ENCODE measurements at regions of chr13 and their contacts with region 1.

Region 1: DNA sequence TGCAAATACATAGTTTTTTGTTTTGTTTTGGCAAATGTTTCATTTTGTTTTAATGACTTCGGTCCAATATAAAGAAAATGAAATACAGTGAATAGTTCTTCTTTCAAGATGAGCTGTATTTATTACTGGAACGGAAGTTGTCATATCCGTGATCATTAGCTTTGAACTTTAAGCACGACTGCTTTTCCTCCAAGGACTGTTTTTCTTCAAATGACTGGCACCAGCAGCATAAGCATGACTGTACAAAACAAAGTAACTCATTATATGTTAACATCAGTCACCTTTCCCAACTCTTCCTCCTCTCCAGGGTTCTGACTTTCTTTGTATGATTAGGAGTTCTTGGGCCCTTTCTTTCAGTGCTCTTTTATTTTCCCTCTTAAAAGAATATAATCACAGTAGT is 20.5 kb downstream of the EDNRB start:
- DNase-seq: no peak
- ATAC-seq: peak; percentile 57
- H3K4me3 Mint-ChIP-seq: no peak overlapping the region
- H3K27ac Mint-ChIP-seq: no peak overlapping the region
- H3K4me1 Mint-ChIP-seq: peaks cover 5% of the 10 kb centered on the region
- H3K27me3 Mint-ChIP-seq: peaks cover 7% of the 10 kb centered on the region
- CTCF ChIP-seq: no peak

Region 2: DNA sequence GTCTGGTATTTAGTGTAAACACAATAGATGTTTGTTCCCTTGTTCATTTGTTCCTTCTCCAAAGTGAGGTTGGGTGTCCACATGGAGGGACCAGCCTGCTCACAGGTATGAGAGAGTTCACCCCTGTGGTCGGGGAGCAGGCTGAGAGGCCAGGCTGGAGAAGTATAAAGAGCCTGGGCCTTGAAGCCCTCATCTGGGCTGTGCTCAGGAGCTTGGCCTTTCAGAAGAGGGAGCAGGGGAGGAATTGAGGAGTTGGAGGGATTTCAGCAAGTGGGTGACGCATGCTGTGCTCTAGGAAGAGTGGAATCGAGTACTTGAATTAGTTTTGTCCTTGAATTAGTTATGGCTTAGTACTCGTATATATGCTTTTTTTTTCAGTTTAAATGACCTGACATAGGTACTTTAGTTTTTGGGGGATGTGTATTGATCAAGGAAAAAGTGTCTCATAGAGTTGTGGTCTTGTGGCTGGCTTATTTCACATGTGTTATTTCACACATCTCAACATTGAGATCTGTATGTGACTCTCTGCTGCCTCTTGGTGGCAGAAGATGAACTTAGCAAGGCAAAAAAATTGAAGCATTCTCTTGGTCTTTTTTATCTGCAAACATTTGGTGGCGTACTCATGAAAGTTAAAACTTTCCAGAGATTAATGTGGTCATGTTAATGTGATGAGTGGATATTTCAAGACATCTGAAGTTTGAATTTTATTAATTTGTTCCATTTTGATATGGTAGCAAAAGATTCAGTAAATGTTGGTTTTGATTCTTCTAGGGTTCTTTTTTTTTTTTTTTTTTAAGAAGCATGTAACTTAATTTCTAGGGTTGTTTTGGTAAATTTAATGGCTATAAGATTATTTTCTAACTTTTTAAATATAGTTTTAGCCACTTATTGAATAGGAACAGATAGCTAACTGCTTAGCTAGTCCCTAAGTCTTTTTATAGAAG is 146.3 kb before region 1 on chr13:
- CTCF ChIA-PET with region 1: no interaction called
- POLR2A ChIA-PET with region 1: no interaction called
- intact Hi-C with region 1: no loop called
- DNase-seq: no peak
- ATAC-seq: peak; percentile 69
- H3K4me3 Mint-ChIP-seq: no peak overlapping the region
- H3K27ac Mint-ChIP-seq: no peak overlapping the region
- H3K4me1 Mint-ChIP-seq: no peaks in the 10 kb centered on the region
- H3K27me3 Mint-ChIP-seq: no peaks in the 10 kb centered on the region
- CTCF ChIP-seq: peak; percentile 91

Region 3: DNA sequence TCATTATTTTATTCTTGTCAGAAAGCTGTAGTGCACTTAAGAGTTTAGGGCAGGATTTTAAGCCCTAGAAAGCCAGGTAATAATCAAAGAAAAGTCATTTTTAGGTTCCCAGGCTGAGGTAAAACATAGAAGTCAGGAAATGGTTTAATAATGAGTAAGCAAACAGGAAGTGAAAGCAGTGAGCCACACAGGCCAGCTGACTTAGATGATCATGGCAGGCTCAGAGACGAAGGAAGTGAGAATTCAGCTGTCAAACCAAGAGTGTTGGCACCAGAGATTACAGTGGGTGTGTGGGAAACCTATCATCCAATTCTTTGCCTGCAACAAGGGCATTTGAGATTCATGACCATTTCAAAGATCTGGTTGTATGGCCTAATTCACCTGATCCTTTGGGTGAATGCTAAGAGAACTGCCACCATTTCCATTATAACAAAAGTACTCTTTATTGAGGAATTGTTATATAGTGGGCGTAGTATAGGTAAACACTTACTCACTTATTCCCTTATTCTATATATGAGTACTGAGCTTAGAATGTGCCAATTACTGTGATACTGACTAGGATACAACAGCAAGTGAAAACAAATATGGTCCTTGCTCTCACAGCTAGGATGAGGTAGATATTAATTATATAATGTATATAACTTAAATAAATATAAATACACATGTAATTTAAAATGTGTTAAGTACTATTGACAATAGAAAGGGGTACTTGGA is 124.2 kb after region 1 on chr13:
- CTCF ChIA-PET with region 1: no interaction called
- POLR2A ChIA-PET with region 1: no interaction called
- intact Hi-C with region 1: loop called (anchors 2 kb)
- DNase-seq: peak; percentile 20
- ATAC-seq: peak; percentile 99
- H3K4me3 Mint-ChIP-seq: no peak overlapping the region
- H3K27ac Mint-ChIP-seq: peak overlapping the region; percentile 19
- H3K4me1 Mint-ChIP-seq: peaks cover 19% of the 10 kb centered on the region
- H3K27me3 Mint-ChIP-seq: peaks cover 4% of the 10 kb centered on the region
- CTCF ChIP-seq: no peak